Heart right ventricle (tissue), 16 donors: ENCODE measurements at regions of chr1 and their contacts with region 1.

Region 1: DNA sequence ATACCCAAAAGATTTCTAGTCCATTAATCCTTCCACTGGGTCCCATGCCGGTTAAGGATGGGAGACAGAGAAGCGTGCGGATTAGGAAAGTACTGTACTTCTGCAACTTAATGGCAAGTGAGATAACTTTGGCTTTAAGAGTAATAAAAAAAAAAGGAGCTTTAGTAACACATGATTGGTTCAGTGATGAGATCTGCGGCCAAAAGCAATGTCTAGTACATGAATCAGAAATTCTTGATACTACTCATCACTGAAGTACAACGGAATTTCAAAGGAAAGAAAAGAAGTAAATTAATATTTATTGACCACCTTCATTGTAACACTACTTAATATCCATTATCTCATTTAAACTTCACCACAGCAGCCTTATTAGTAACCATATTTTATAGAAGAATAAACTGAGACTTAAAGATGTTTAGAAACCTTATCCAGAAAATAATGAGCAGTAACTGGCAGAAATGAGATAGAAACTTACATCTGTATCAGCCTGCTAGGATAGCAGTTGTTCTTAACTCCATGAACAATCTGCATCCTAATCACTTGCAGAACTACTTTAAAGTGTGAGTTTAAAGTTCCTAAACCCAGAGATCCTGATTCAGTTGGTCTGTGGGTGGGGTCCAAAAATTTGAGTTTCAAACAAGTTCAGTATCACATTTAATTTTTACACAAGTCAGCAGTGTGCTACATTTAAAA is 14.1 kb upstream of the NUF2 start:
- DNase-seq: no peak
- ATAC-seq: no peak
- H3K4me3 ChIP-seq: no peak overlapping the region
- H3K27ac ChIP-seq: no peak overlapping the region
- H3K4me1 ChIP-seq: no peaks in the 10 kb centered on the region
- H3K27me3 ChIP-seq: no peaks in the 10 kb centered on the region
- CTCF ChIP-seq: no peak

Region 2: DNA sequence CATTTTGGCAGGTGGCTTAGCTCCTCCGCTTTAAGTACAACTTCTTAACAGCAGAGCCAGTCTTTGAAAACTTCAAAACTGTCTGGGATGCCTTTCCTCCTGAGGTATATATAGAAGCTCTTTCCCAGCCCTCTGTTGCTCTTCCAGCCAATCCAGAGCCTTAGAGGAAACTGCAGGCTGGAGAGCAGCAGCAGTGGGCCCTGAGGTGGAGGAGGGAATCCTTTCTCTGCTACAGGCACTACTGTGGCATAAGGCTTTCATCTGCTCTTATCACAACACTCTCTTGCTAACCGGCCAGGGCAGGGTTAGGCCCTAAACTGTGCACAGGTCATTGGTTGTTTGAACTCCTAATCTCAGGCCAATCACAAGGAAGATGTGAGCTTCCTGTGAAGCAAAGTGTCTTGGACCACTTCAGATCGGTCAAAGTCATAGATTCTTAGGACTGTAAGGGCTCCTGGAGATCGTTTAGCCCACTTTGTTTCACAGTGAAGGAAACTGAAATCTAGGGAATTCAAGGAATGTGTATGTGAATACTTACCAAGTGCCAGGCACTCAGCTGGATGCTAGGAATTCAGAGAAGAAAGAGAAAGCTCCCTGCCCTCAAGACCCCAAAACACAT is 104.7 kb before region 1 on chr1 and contains the start of gene RGS5:
- intact Hi-C with region 1: loop called in 2 of 10 experiments (anchors 10 kb)
- DNase-seq: peak; percentile 9 to 18
- ATAC-seq: peak; percentile 62 to 93 (median 85)
- H3K4me3 ChIP-seq: peak within 1 kb of the TSS in 9 of 10 donors; percentile 18 to 53 (median 36)
- H3K27ac ChIP-seq: peak within 1 kb of the TSS in 5 of 10 donors; percentile 26 to 57 (median 33)
- H3K4me1 ChIP-seq: peaks cover 0 to 20% (median 0%) of the 10 kb centered on the region in 9 donors
- H3K27me3 ChIP-seq: no peaks in the 10 kb centered on the region
- CTCF ChIP-seq: no peak
- total RNA-seq, gene RGS5: 120 to 393 (median 207) TPM